MCF 10A (cell line): ENCODE measurements at regions of chr1 and their contacts with region 1.

Region 1: GRCh38 chr1:156601122-156601830 is at the start of gene GPATCH4:
- DNase-seq: peak; percentile 94
- H3K4me3 Mint-ChIP-seq: peak within 1 kb of the TSS; percentile 86
- H3K27ac Mint-ChIP-seq: peak within 1 kb of the TSS; percentile 94
- H3K4me1 Mint-ChIP-seq: peaks cover 18% of the 10 kb centered on the region
- H3K27me3 Mint-ChIP-seq: no peaks in the 10 kb centered on the region
- CTCF ChIP-seq: no peak
- total RNA-seq, gene GPATCH4: 67.3 and 107 TPM in 2 replicates

Region 2: GRCh38 chr1:156583821-156584622 is 17.3 kb before region 1 on chr1:
- CTCF ChIA-PET with region 1: interaction called, 64 read pairs
- POLR2A ChIA-PET with region 1: interaction called, 134 read pairs
- intact Hi-C with region 1: no loop called
- DNase-seq: peak; percentile 89
- H3K4me3 Mint-ChIP-seq: no peak overlapping the region
- H3K27ac Mint-ChIP-seq: peak overlapping the region; percentile 75
- H3K4me1 Mint-ChIP-seq: peaks cover 6% of the 10 kb centered on the region
- H3K27me3 Mint-ChIP-seq: no peaks in the 10 kb centered on the region
- CTCF ChIP-seq: peak; percentile 98

Region 3: GRCh38 chr1:156781585-156782186 is 180.4 kb after region 1 on chr1:
- CTCF ChIA-PET with region 1: no interaction called
- POLR2A ChIA-PET with region 1: no interaction called
- intact Hi-C with region 1: no loop called
- DNase-seq: no peak
- H3K4me3 Mint-ChIP-seq: no peak overlapping the region
- H3K27ac Mint-ChIP-seq: peak overlapping the region; percentile 66
- H3K4me1 Mint-ChIP-seq: peaks cover 28% of the 10 kb centered on the region
- H3K27me3 Mint-ChIP-seq: no peaks in the 10 kb centered on the region
- CTCF ChIP-seq: no peak

Region 4: DNA sequence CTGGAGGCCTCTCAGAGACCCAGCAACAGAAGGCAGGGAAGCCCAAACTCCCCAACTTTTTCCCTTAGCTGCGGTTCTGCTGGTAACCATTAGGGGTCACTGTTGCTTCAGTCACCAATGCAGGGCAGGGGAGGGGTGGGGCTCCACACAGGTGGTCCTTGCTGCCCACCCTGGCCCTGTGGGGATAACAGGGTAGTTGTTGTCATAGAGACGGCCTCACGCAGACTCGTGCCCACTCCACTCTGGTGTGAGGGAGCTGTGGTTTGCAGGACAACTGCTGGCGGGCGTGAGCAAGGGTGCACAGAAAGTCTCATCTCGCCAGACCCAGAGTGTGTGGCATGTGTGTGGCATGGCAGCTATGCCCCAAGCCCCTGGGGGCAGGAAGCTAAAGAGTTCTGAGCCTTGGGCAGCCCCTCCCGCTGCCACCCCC is 237.7 kb after region 1 on chr1:
- CTCF ChIA-PET with region 1: no interaction called
- POLR2A ChIA-PET with region 1: no interaction called
- intact Hi-C with region 1: no loop called
- DNase-seq: peak; percentile 60
- H3K4me3 Mint-ChIP-seq: no peak overlapping the region
- H3K27ac Mint-ChIP-seq: no peak overlapping the region
- H3K4me1 Mint-ChIP-seq: no peaks in the 10 kb centered on the region
- H3K27me3 Mint-ChIP-seq: peaks cover 32% of the 10 kb centered on the region
- CTCF ChIP-seq: peak; percentile 93